ENCODE measurements at regions of chr12 and their contacts with region 1.

Region 1: GRCh38 chr12:9868301-9868935 is 736 bp downstream of the CLEC2B start:
- DNase-seq: peak; percentile 59
- H3K4me3 ChIP-seq: peak overlapping the region; percentile 53
- H3K27ac ChIP-seq: peak overlapping the region; percentile 74
- H3K4me1 ChIP-seq: peaks cover 4% of the 10 kb centered on the region
- H3K27me3 ChIP-seq: no peaks in the 10 kb centered on the region
- CTCF ChIP-seq: no peak

Region 2: DNA sequence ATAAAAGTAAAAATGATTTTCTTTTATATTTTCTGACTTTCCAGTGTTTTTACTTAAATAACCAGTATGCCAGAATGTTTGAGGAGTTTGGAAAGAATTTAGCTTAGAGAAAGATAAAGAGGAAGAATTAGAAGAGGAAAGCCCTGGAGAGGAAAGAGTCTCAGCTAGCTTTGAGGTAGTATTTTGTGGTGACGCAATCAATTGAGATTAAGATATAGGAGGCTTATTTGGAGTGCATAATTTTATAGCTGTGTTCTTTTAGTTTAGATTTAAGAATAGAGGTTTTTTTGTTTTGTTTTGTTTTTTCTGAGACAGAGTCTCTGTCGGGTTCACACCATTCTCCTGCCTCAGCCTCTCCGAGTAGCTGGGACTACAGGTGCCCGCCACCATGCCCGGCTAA is 17.4 kb before region 1 on chr12:
- CTCF ChIA-PET with region 1: no interaction called
- POLR2A ChIA-PET with region 1: interaction called, 15 read pairs
- intact Hi-C with region 1: no loop called
- DNase-seq: no peak
- H3K4me3 ChIP-seq: no peak overlapping the region
- H3K27ac ChIP-seq: no peak overlapping the region
- H3K4me1 ChIP-seq: no peaks in the 10 kb centered on the region
- H3K27me3 ChIP-seq: no peaks in the 10 kb centered on the region
- CTCF ChIP-seq: no peak

Region 3: DNA sequence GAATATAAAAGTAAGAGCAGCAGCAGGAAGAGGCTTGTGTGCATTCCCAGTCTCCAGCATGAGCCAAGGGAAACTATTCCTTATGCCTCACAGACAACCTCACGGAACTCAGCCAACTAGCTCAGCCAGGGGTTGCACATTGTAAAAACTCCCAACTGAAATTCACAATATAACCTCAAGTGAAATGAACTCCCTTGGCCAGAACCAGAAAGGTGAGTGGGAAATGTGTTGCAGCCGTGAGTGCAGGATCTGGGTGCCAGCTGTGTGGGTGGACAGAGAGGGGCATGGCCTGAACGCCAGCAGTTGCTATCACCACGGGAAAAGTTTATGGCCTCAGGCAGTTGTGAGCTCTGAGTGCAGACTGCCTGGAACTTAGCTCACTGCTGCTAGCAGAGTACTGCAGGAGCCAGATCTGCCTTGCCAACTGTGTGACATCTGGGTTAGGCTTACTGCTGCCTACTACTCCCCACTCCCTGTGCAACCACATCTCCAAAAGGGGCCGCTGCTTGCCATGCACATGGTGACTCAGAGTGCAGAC is 232.7 kb after region 1 on chr12:
- CTCF ChIA-PET with region 1: no interaction called
- POLR2A ChIA-PET with region 1: no interaction called
- intact Hi-C with region 1: no loop called
- DNase-seq: no peak
- H3K4me3 ChIP-seq: no peak overlapping the region
- H3K27ac ChIP-seq: no peak overlapping the region
- H3K4me1 ChIP-seq: no peaks in the 10 kb centered on the region
- H3K27me3 ChIP-seq: no peaks in the 10 kb centered on the region
- CTCF ChIP-seq: no peak

Region 4: DNA sequence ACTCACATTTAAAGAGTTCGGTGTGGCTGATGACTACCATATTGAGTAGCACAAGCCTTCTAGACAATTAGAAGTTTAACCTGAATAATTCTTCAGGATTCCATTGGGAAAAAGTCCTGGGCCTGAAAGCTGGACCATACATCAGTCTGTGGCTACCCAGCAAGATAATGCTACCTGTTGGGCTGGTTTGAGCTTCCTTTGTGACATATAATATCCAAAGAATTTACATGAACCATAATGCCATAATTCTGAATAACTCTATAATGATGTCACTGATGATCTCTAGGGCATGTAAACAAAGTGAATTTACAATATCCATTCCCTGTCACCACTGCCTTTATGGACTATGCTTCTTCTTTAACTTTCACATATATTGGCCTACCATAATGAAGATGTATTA is 858.5 kb after region 1 on chr12:
- CTCF ChIA-PET with region 1: no interaction called
- POLR2A ChIA-PET with region 1: no interaction called
- intact Hi-C with region 1: no loop called
- DNase-seq: no peak
- H3K4me3 ChIP-seq: no peak overlapping the region
- H3K27ac ChIP-seq: no peak overlapping the region
- H3K4me1 ChIP-seq: peaks cover 10% of the 10 kb centered on the region
- H3K27me3 ChIP-seq: no peaks in the 10 kb centered on the region
- CTCF ChIP-seq: no peak

Region 5: GRCh38 chr12:10884086-10884725 is 1015.8 kb after region 1 on chr12 and contains the start of gene PRH1:
- CTCF ChIA-PET with region 1: no interaction called
- POLR2A ChIA-PET with region 1: no interaction called
- intact Hi-C with region 1: no loop called
- DNase-seq: no peak
- H3K4me3 ChIP-seq: no peak within 1 kb of the TSS
- H3K27ac ChIP-seq: no peak within 1 kb of the TSS
- H3K4me1 ChIP-seq: no peaks in the 10 kb centered on the region
- H3K27me3 ChIP-seq: no peaks in the 10 kb centered on the region
- CTCF ChIP-seq: no peak
- total RNA-seq, gene PRH1: 21.8 and 24.0 TPM in 2 replicates